ENCODE measurements at regions of chr4 and their contacts with region 1.

Region 1: GRCh38 chr4:165124463-165124862 is 11.8 kb upstream of the TMEM192 start:
- DNase-seq: no peak
- CTCF ChIP-seq: no peak

Region 2: DNA sequence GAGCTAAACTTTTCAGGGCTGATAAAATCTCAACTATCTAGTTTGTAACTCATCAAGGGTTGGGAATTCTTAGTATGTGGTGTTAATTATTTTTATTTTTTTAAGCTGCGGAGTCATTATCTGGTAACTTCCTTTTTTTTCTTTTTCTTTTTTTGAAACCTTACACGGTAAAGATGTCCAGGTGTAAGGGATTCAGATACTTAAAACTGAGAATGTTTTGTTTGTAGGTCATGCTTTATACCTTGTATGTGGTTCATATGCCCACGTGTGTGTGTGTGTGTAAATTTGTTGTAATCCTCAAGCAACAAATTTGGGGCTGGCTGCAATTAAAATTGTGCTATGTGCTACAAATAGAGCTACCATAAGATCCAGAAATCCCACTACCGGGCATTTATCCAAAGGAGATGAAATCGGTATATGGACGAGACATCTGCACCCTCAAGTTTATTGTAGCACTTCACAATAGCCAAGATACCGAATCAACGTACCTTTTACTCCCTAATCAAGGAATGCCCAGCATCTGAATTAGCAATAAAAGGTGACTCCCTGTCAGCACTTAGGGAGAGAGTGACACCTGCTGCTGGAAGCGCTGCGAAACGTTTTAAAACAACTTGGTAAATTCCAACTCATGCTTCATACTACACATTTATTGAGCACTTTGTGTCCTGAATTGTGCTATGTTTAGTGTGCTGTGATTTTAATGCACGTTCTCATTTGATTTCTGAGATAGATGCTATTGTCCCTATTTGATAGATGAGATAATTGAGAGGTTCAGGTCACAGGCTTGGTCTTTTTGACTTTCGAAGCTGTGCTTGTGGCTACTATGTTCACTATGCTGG is 219.1 kb after region 1 on chr4:
- in situ Hi-C with region 1: loop called (anchors 10 kb)
- DNase-seq: no peak
- CTCF ChIP-seq: peak; percentile 17

Measured in GM13977 (cell line).